B cell (primary cell): ENCODE measurements at regions of chr14 and their contacts with region 1.

Region 1: GRCh38 chr14:61269321-61270083 is 11.6 kb downstream of the TMEM30B start:
- DNase-seq: peak; percentile 73
- ATAC-seq: peak; percentile 86
- H3K4me3 ChIP-seq: peak overlapping the region in 2 of 5 experiments; percentile 27 to 28
- H3K4me3 Mint-ChIP-seq: peak overlapping the region; percentile 68
- H3K27ac ChIP-seq: no peak overlapping the region
- H3K27ac Mint-ChIP-seq: no peak overlapping the region
- H3K4me1 ChIP-seq: peaks cover 0 to 3% of the 10 kb centered on the region in 2 donors
- H3K4me1 Mint-ChIP-seq: peaks cover 3% of the 10 kb centered on the region
- H3K27me3 ChIP-seq: peaks cover 0 to 23% (median 12%) of the 10 kb centered on the region in 4 experiments
- H3K27me3 Mint-ChIP-seq: peaks cover 60% of the 10 kb centered on the region
- CTCF ChIP-seq: peak; percentile 89

Region 2: GRCh38 chr14:61281186-61281947 is 11.9 kb after region 1 on chr14 and contains the start of gene TMEM30B:
- CTCF ChIA-PET with region 1: interaction called, 5 read pairs
- POLR2A ChIA-PET with region 1: no interaction called
- intact Hi-C with region 1: loop called (anchors 1 kb)
- DNase-seq: no peak
- ATAC-seq: no peak
- H3K4me3 ChIP-seq: peak within 1 kb of the TSS in 4 of 5 experiments; percentile 18 to 53 (median 42)
- H3K4me3 Mint-ChIP-seq: peak within 1 kb of the TSS; percentile 83
- H3K27ac ChIP-seq: no peak within 1 kb of the TSS
- H3K27ac Mint-ChIP-seq: peak within 1 kb of the TSS; percentile 65
- H3K4me1 ChIP-seq: peaks cover 10 to 18% of the 10 kb centered on the region in 2 donors
- H3K4me1 Mint-ChIP-seq: peaks cover 13% of the 10 kb centered on the region
- H3K27me3 ChIP-seq: peaks cover 0 to 29% (median 26%) of the 10 kb centered on the region in 4 experiments
- H3K27me3 Mint-ChIP-seq: peaks cover 67% of the 10 kb centered on the region
- CTCF ChIP-seq: no peak
- total RNA-seq, gene TMEM30B: 0.20 and 0.44 TPM in 2 replicates